Head of caudate nucleus (tissue), 42 donors: ENCODE measurements at regions of chr17 and their contacts with region 1.

Region 1: GRCh38 chr17:46044286-46044928 is 45.4 kb downstream of the STH start:
- DNase-seq: peak in 38 of 42 donors; percentile 29 to 92 (median 77)

Region 2: GRCh38 chr17:45828628-45829027 is 215.8 kb before region 1 on chr17:
- intact Hi-C with region 1: no loop called
- DNase-seq: no peak

Region 3: DNA sequence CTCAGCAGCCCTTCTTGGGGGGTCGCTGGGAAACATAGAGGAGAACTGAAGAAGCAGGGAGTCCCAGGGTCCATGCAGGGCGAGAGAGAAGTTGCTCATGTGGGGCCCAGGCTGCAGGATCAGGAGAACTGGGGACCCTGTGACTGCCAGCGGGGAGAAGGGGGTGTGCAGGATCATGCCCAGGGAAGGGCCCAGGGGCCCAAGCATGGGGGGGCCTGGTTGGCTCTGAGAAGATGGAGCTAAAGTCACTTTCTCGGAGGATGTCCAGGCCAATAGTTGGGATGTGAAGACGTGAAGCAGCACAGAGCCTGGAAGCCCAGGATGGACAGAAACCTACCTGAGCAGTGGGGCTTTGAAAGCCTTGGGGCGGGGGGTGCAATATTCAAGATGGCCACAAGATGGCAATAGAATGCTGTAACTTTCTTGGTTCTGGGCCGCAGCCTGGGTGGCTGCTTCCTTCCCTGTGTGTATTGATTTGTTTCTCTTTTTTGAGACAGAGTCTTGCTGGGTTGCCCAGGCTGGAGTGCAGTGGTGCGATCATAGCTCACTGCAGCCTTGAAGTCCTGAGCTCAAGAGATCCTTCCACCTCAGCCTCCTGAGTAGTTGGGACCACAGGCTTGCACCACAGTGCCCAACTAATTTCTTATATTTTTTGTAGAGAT is 42.0 kb before region 1 on chr17:
- intact Hi-C with region 1: loop called (anchors 5 kb)
- DNase-seq: peak; percentile 43 to 91 (median 76)